ENCODE measurements at regions of chr16 and their contacts with region 1.

Region 1: DNA sequence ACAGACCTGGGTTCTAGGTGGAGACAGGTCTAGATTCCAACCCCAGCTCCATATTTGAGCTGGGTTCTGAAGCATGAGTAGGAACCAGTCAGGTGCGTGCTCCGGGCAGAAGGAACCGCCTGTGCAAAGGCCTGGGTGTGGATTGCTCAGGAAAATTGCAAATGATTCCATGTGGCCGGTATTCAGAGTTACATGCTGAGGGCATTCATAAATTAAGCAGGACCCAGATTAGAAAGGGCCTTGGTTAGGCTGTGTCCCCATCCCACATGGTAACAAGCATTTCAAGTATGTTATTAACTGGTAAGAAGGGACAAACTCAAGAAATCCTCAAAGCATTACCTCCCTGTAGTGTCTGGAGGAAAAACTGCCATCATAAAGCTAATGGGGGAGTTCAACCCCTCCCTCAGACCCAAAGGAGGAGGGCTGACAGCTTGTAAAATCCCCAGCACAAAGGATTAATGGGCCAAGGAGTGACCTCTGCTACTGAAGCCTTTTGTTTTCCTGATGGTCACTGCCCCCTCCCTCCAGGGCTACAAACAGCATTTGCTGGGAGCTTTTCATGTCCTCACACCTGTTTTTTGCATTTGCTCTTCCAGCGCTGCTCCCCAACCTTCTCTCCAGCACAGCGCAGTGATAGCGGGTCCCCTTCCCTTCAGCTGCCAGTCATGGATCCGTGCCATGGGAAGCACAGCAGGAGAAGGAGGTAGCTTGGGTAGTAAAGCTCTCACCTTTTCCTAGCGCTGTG is 218.0 kb downstream of the C16orf95 start:
- DNase-seq: no peak
- H3K4me3 ChIP-seq: no peak overlapping the region
- H3K27ac ChIP-seq: no peak overlapping the region
- H3K4me1 ChIP-seq: peaks cover 0 to 16% (median 6%) of the 10 kb centered on the region in 4 experiments; a peak in 6 of 7 replicates
- H3K27me3 ChIP-seq: no peaks in the 10 kb centered on the region
- CTCF ChIP-seq: no peak
- EP300 ChIP-seq: no peak
- POLR2A ChIP-seq: no peak
- RAD21 ChIP-seq: no peak

Region 2: GRCh38 chr16:87033541-87034300 is 65.4 kb before region 1 on chr16:
- CTCF ChIA-PET with region 1: no interaction called
- POLR2A ChIA-PET with region 1: no interaction called
- DNase-seq: no peak
- H3K4me3 ChIP-seq: no peak overlapping the region
- H3K27ac ChIP-seq: no peak overlapping the region
- H3K4me1 ChIP-seq: no peaks in the 10 kb centered on the region; a peak in 1 of 7 replicates
- H3K27me3 ChIP-seq: no peaks in the 10 kb centered on the region
- CTCF ChIP-seq: no peak
- EP300 ChIP-seq: no peak
- POLR2A ChIP-seq: no peak
- RAD21 ChIP-seq: no peak

Region 3: GRCh38 chr16:87076950-87077749 is 22.0 kb before region 1 on chr16:
- CTCF ChIA-PET with region 1: interaction called, 16 read pairs
- POLR2A ChIA-PET with region 1: no interaction called
- DNase-seq: peak; percentile 65 to 91
- H3K4me3 ChIP-seq: no peak overlapping the region
- H3K27ac ChIP-seq: no peak overlapping the region
- H3K4me1 ChIP-seq: no peaks in the 10 kb centered on the region; a peak in 2 of 7 replicates
- H3K27me3 ChIP-seq: no peaks in the 10 kb centered on the region
- CTCF ChIP-seq: peak; percentile 88 to 97 (median 93)
- EP300 ChIP-seq: no peak
- POLR2A ChIP-seq: no peak
- RAD21 ChIP-seq: peak; percentile 80 to 86

Measured in H1 (cell line).